ENCODE measurements at regions of chr1 and their contacts with region 1.

Region 1: DNA sequence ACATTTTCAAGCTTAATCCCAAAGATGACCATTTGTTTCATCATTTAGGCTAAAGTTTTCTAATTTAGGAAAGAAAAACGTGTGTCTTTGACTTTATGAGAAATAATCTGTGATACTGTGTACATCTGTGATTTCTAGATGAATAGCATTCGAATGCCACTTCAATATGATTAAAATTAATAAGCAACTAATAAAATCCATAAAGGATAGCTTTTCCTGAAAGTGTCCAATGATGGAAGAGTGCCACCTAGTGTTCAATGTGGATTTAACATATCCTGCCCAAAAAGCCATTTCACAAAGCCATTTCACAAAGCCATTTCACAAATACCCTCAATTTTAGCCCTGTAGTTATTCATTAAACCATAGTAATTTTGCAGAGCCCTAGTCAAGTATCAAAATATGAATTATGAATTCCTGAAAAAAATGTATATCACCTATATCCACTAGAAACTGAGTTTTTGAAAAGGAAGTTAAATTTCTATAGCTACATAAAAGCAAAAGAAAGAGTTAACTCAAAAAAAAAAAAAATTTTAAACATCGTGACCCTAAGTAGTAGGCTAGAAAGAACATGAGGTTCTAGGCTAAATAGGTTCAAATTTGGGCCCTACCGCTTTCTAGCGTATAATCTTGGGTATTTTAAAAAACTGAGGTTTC is 19.1 kb downstream of the NME7 start:
- DNase-seq: peak; percentile 84
- ATAC-seq: no peak
- H3K4me3 ChIP-seq: no peak overlapping the region
- H3K27ac ChIP-seq: no peak overlapping the region
- H3K4me1 ChIP-seq: 0 out of 2 replicates have a peak, but pooled peaks cover 2% of the 10 kb centered on the region
- H3K27me3 ChIP-seq: no peaks in the 10 kb centered on the region
- CTCF ChIP-seq: peak; percentile 97

Region 2: GRCh38 chr1:168342572-168343280 is 1005.8 kb before region 1 on chr1:
- CTCF ChIA-PET with region 1: no interaction called
- POLR2A ChIA-PET with region 1: no interaction called
- intact Hi-C with region 1: loop called (anchors 2 kb)
- DNase-seq: peak; percentile 92
- ATAC-seq: peak; percentile 96
- H3K4me3 ChIP-seq: peak overlapping the region; percentile 47
- H3K27ac ChIP-seq: no peak overlapping the region
- H3K4me1 ChIP-seq: peaks cover 12% of the 10 kb centered on the region; the same call in 1 of the 2 replicates
- H3K27me3 ChIP-seq: no peaks in the 10 kb centered on the region
- CTCF ChIP-seq: peak; percentile 70

Region 3: GRCh38 chr1:168603501-168604110 is 744.9 kb before region 1 on chr1:
- CTCF ChIA-PET with region 1: interaction called, 44 read pairs
- POLR2A ChIA-PET with region 1: no interaction called
- intact Hi-C with region 1: loop called (anchors 2 kb)
- DNase-seq: peak; percentile 85
- ATAC-seq: peak; percentile 95
- H3K4me3 ChIP-seq: no peak overlapping the region
- H3K27ac ChIP-seq: no peak overlapping the region
- H3K4me1 ChIP-seq: peaks cover 8% of the 10 kb centered on the region; the same call in 1 of the 2 replicates
- H3K27me3 ChIP-seq: no peaks in the 10 kb centered on the region
- CTCF ChIP-seq: peak; percentile 97

Region 4: DNA sequence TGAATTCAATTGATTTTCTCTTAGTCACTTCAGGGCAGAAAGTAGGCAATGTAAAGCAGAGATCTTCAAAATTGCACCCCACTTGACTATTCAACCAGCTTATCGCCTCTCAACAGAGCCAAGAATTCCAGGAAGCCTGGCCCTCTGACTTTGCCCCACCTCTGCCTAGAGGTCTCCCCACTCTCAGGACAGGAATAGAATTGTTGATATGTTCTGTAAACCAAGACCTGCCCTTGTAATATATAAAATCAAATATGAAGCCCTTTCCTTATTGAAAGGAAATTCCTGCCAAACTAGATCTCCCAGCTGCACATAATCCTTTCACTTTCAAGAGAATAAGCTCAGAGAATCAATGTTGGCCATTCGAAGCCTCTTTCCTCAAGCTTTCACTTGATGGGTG is 503.4 kb before region 1 on chr1:
- CTCF ChIA-PET with region 1: no interaction called
- POLR2A ChIA-PET with region 1: no interaction called
- intact Hi-C with region 1: no loop called
- DNase-seq: no peak
- ATAC-seq: no peak
- H3K4me3 ChIP-seq: no peak overlapping the region
- H3K27ac ChIP-seq: no peak overlapping the region
- H3K4me1 ChIP-seq: peaks cover 22% of the 10 kb centered on the region
- H3K27me3 ChIP-seq: no peaks in the 10 kb centered on the region
- CTCF ChIP-seq: no peak

Region 5: DNA sequence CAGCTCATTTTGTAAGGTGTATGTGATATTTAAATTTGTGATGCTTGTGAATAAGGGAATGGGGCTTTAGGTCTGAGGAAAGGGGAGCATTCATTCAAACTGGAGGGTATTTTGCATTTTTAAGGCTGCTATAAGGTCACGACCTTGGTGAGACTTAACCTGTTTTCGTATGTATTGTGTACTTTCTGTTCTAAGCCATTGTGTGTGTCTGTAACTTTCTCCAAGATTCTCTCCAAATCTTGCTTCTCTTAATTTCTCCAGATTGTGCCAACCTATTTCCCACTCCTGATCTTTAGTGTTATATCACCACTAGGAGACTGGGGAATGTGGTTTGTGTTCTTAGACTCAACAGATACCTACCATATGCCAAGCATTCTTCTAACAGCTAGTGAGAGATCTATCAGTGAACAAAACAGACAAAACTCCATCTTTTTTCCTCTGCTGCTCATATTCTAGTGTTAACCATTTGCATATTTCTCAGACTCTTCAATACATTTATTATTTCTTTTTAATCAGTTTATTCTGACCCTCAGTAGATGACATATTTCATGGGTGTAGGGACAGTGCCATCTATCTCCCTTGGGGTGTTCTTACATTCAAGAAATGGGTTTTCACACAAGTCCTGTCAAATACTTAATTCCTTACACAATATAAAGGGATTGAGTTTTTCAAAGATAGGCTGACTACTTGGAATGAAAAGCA is 214.6 kb before region 1 on chr1:
- CTCF ChIA-PET with region 1: interaction called, 4 read pairs
- POLR2A ChIA-PET with region 1: no interaction called
- intact Hi-C with region 1: loop called (anchors 1 kb)
- DNase-seq: peak; percentile 34
- ATAC-seq: peak; percentile 33
- H3K4me3 ChIP-seq: no peak overlapping the region
- H3K27ac ChIP-seq: no peak overlapping the region
- H3K4me1 ChIP-seq: peaks cover 27% of the 10 kb centered on the region
- H3K27me3 ChIP-seq: no peaks in the 10 kb centered on the region
- CTCF ChIP-seq: peak; percentile 66

Region 6: DNA sequence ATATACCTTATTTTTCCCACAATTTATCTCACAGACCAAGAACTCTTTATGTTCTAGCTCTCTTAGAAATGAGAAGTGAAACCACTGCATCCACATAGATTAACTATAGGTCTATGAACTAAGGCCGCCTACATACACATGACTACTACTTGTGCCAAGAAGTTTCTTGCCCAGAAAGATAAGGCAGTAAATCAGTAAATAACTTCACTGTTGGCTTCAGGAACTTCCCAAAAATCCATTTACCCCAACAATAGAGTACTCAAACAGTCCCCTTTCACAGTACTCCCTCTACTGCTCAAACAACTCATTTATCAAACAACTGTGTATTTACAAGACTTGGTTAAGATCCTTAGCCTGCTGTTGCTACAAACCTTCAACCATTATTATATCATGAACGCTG is 77.4 kb before region 1 on chr1:
- CTCF ChIA-PET with region 1: interaction called, 3 read pairs
- POLR2A ChIA-PET with region 1: no interaction called
- intact Hi-C with region 1: loop called (anchors 5 kb)
- DNase-seq: peak; percentile 50
- ATAC-seq: peak; percentile 69
- H3K4me3 ChIP-seq: no peak overlapping the region
- H3K27ac ChIP-seq: no peak overlapping the region
- H3K4me1 ChIP-seq: no peaks in the 10 kb centered on the region
- H3K27me3 ChIP-seq: no peaks in the 10 kb centered on the region
- CTCF ChIP-seq: peak; percentile 60

Measured in PC-3 (cell line).